Dorsolateral prefrontal cortex (tissue), 120 donors: ENCODE measurements at regions of chr2 and their contacts with region 1.

Region 1: GRCh38 chr2:226799181-226799975 is at the start of gene IRS1:
- DNase-seq: peak in 7 of 10 donors; percentile 52 to 76 (median 60)
- H3K4me3 ChIP-seq: peak within 1 kb of the TSS; percentile 50 to 89 (median 77)
- H3K27ac ChIP-seq: peak within 1 kb of the TSS in 58 of 59 donors; percentile 28 to 94 (median 86)
- H3K27me3 ChIP-seq: no peaks in the 10 kb centered on the region
- CTCF ChIP-seq: peak in 22 of 56 donors; percentile 7 to 66 (median 37)
- total RNA-seq, gene IRS1: 6.8 to 23.0 (median 14.4) TPM

Region 2: GRCh38 chr2:225668606-225669266 is 1130.6 kb before region 1 on chr2:
- intact Hi-C with region 1: loop called (anchors 5 kb)
- DNase-seq: peak in 1 of 10 donors; percentile 11
- H3K4me3 ChIP-seq: no peak overlapping the region
- H3K27ac ChIP-seq: no peak overlapping the region
- H3K27me3 ChIP-seq: no peaks in the 10 kb centered on the region
- CTCF ChIP-seq: peak; percentile 54 to 86 (median 73)

Region 3: DNA sequence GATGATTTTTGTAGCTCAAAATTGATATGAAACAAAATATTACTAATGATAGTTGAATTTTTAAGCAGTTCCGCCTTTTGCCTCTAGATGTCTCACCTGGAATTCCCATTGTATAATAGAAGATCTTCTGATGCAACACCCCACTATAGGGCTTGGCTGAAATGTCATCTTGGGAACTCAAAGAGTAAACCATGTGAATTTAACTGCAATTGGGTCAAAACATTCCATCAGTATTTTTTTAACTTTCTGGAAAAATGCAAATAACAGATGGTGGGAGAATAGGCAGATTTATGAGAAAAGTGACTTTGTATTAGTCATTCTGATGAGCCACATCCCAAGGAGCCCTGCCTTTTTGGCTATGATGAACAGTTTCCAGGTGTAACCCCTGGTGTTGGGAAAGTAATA is 909.9 kb before region 1 on chr2:
- intact Hi-C with region 1: loop called (anchors 5 kb)
- DNase-seq: no peak
- H3K4me3 ChIP-seq: no peak overlapping the region
- H3K27ac ChIP-seq: no peak overlapping the region
- H3K27me3 ChIP-seq: no peaks in the 10 kb centered on the region
- CTCF ChIP-seq: peak; percentile 62 to 96 (median 78)

Region 4: DNA sequence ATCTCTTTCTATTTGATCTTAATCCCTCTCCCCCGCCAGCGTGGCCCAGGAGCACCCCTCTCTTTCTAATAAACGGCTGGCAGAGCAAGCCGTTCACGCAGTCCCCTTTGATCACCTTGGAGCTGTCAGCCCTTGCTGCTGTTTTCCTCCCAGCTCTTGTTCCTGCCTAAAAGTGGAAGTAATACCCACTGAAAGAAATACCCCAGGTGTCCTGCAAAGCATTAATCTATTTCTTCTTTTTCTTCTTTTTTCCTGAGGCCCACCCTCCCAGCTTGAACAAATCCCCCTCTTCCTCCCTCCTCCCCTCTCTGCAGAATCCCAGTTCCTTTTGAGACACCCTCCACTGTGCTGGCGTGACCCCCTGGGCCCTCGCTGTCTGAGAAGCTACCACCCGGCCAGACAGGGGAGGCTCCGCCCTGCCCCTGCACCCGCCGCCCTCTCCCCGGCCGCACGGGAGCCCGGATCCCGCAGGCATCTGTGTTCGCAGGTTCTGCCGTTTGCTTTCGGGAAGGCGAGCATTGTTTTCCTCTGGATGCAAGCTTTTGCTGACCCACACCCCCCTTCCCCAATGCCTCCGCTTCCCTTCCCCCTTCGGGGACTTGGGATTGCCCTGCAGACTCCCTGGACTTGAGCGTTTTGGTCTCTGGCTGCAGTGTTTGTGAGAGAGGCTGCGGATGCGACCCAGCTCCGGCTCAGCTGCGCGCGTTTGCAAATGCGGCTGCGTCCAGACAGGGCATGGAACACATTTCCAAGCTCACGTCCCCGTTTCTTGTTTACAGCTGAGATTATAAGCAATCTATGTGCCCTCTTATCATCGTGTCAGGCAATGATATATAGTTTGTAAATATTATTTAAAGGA is 768.4 kb before region 1 on chr2:
- intact Hi-C with region 1: loop called (anchors 5 kb)
- DNase-seq: peak; percentile 43 to 78 (median 64)
- H3K4me3 ChIP-seq: peak overlapping the region; percentile 42 to 80 (median 64)
- H3K27ac ChIP-seq: peak overlapping the region in 58 of 59 donors; percentile 9 to 91 (median 78)
- H3K27me3 ChIP-seq: no peaks in the 10 kb centered on the region
- CTCF ChIP-seq: peak in 2 of 56 donors; percentile 6 to 9

Region 5: GRCh38 chr2:226215902-226216503 is 583.4 kb before region 1 on chr2:
- intact Hi-C with region 1: loop called (anchors 5 to 10 kb)
- DNase-seq: peak in 6 of 10 donors; percentile 5 to 44 (median 42)
- H3K4me3 ChIP-seq: no peak overlapping the region
- H3K27ac ChIP-seq: no peak overlapping the region
- H3K27me3 ChIP-seq: no peaks in the 10 kb centered on the region
- CTCF ChIP-seq: peak in 55 of 56 donors; percentile 28 to 79 (median 60)

Region 6: DNA sequence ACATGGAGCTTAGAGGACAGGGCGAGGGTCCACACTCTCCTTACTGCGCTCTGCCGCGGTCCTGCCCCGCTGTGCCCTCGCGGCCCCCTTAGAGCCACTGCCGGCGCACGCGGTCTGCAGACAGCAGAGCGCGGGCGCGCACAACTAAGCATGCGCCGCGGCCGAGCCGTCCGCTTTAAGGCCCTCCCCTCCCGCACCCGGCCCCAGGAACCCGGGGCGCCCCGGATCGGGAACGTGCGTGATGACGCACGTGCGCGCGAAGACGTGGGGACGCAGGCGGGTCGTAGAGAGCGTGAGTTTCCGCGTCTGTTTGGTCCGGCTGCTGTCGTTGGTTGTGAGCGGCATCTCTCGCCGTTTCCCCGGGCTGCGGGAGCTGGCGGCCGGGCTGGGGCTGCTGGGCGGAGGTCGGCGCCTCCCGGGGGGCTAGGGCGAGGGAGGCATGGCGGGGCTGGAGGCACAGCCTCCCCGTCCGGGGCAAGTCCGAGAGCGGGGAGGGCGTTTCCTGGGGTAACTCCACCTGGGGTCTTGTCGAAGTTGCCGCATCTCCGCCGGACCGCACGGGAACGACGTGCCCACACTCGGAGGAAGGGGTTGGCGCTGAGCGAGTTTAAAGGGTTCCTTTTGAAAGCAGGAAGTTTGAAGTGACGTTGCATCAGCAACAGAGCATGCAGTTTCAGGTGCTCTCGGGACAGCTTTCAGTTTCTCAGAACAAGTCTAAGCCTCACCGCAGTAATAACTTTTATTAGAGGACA is 36.6 kb after region 1 on chr2 and contains the start of gene RHBDD1:
- intact Hi-C with region 1: loop called in 1 of 2 experiments (anchors 1 kb)
- DNase-seq: peak; percentile 85 to 97 (median 94)
- H3K4me3 ChIP-seq: peak within 1 kb of the TSS; percentile 60 to 99 (median 85)
- H3K27ac ChIP-seq: peak within 1 kb of the TSS; percentile 41 to 96 (median 90)
- H3K27me3 ChIP-seq: no peaks in the 10 kb centered on the region
- CTCF ChIP-seq: peak in 38 of 56 donors; percentile 3 to 59 (median 35)
- total RNA-seq, gene RHBDD1: 36.7 to 99.9 (median 61.0) TPM